PC-3 (cell line): ENCODE measurements at regions of chr10 and their contacts with region 1.

Region 1: GRCh38 chr10:132571650-132572535 is 34.3 kb downstream of the INPP5A start:
- DNase-seq: peak; percentile 94
- ATAC-seq: peak; percentile 73
- H3K4me3 ChIP-seq: peak overlapping the region; percentile 51; the same call in 1 of the 2 replicates
- H3K27ac ChIP-seq: peak overlapping the region; percentile 92
- H3K4me1 ChIP-seq: peaks cover 49% of the 10 kb centered on the region
- H3K27me3 ChIP-seq: no peaks in the 10 kb centered on the region
- CTCF ChIP-seq: no peak; the same call in 1 of the 2 replicates

Region 2: DNA sequence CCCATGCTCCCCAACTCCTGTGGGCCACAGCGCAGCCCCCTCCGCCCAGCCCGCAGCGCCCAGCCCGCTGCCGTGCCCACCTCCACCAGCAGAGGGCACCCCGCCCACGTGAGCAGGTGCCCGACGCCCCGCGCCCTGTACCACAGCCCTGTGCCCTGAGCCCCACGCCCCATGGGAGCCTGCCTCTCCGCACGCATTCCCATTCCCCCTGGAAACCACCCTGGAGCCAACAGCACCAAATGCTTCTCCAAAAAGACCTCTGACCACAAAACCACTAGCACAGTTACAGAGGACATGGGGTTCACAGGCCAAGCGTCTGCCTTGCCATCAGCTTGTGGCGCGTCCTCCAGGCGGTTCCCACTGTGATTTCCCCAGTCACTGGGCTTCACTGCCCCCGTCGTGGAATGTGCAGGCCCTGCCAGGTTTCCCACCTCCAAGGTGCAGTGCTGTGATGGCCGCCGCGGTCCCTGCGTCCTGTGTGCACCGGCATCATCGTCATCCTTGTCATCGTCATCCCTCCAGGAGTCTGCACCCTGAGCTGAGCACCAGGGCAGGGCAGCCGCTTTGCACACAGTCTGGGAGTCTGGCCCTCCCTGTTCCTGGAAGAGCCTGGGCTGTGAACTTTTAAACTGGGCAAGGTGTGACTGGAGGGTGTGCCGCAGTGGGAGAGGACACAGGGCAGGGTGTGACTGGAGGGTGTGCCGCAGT is 113.1 kb before region 1 on chr10:
- CTCF ChIA-PET with region 1: no interaction called
- POLR2A ChIA-PET with region 1: no interaction called
- intact Hi-C with region 1: loop called (anchors 2 kb)
- DNase-seq: peak; percentile 36
- ATAC-seq: peak; percentile 68
- H3K4me3 ChIP-seq: no peak overlapping the region
- H3K27ac ChIP-seq: no peak overlapping the region
- H3K4me1 ChIP-seq: 0 out of 2 replicates have a peak, but pooled peaks cover 5% of the 10 kb centered on the region
- H3K27me3 ChIP-seq: no peaks in the 10 kb centered on the region
- CTCF ChIP-seq: peak; percentile 88

Region 3: GRCh38 chr10:132526676-132527075 is 45.2 kb before region 1 on chr10:
- CTCF ChIA-PET with region 1: no interaction called
- POLR2A ChIA-PET with region 1: no interaction called
- intact Hi-C with region 1: no loop called
- DNase-seq: no peak
- ATAC-seq: peak; percentile 67
- H3K4me3 ChIP-seq: no peak overlapping the region
- H3K27ac ChIP-seq: no peak overlapping the region
- H3K4me1 ChIP-seq: peaks cover 2% of the 10 kb centered on the region; the same call in 1 of the 2 replicates
- H3K27me3 ChIP-seq: no peaks in the 10 kb centered on the region
- CTCF ChIP-seq: no peak

Region 4: GRCh38 chr10:132536971-132537712 is 34.8 kb before region 1 on chr10:
- CTCF ChIA-PET with region 1: interaction called, 3 read pairs
- POLR2A ChIA-PET with region 1: no interaction called
- intact Hi-C with region 1: loop called (anchors 1 kb)
- DNase-seq: peak; percentile 97
- ATAC-seq: peak; percentile 66
- H3K4me3 ChIP-seq: peak overlapping the region; percentile 69
- H3K27ac ChIP-seq: peak overlapping the region; percentile 24; the same call in 1 of the 2 replicates
- H3K4me1 ChIP-seq: peaks cover 70% of the 10 kb centered on the region
- H3K27me3 ChIP-seq: no peaks in the 10 kb centered on the region
- CTCF ChIP-seq: no peak

Region 5: GRCh38 chr10:132591166-132591971 is 19.5 kb after region 1 on chr10:
- CTCF ChIA-PET with region 1: interaction called, 5 read pairs
- POLR2A ChIA-PET with region 1: interaction called, 3 read pairs
- intact Hi-C with region 1: loop called (anchors 1 kb)
- DNase-seq: peak; percentile 82
- ATAC-seq: peak; percentile 98
- H3K4me3 ChIP-seq: peak overlapping the region; percentile 45
- H3K27ac ChIP-seq: peak overlapping the region; percentile 91
- H3K4me1 ChIP-seq: peaks cover 39% of the 10 kb centered on the region
- H3K27me3 ChIP-seq: no peaks in the 10 kb centered on the region
- CTCF ChIP-seq: no peak; the same call in 1 of the 2 replicates

Region 6: GRCh38 chr10:132637477-132638129 is 65.7 kb after region 1 on chr10:
- CTCF ChIA-PET with region 1: no interaction called
- POLR2A ChIA-PET with region 1: no interaction called
- intact Hi-C with region 1: loop called (anchors 2 kb)
- DNase-seq: peak; percentile 76
- ATAC-seq: peak; percentile 70
- H3K4me3 ChIP-seq: no peak overlapping the region
- H3K27ac ChIP-seq: no peak overlapping the region
- H3K4me1 ChIP-seq: peaks cover 7% of the 10 kb centered on the region
- H3K27me3 ChIP-seq: no peaks in the 10 kb centered on the region
- CTCF ChIP-seq: peak; percentile 77

Region 7: DNA sequence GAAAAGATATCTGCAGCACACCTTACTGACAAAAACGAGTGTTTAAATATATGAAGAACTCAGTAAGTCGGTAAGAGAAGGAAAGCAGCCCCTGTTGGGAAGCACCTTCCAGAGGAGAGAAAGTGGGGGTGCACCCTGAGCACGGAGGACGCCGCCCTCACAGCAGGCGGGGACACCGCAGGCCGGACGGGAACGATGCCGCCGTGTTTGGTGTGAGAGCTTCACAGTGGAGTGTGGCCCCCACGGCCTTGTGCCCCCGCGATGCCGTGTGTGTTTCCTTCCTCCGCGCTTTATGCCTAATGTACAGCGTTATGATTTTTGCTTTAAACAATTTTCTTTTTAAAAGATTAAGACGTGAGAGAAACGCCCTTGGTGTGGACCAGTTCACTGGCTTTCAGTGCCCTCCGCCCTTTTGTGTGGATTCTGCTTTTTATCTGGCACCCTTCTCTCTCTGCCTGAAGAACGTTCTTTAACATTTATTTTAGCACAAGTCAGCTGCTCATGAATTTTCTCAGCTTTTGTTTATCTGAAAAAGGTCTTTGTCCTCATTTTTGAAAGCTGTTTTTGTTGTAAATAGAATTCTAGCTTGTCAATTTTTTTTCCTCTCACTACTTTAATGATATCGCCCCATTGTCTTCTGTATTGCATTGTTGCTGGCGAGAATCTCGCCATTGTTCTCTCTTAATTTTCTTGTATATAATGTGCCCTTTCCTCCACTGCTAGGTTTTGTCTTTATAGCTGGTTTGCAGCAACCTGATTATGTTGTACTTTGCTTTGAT is 76.4 kb after region 1 on chr10:
- CTCF ChIA-PET with region 1: no interaction called
- POLR2A ChIA-PET with region 1: no interaction called
- intact Hi-C with region 1: no loop called
- DNase-seq: no peak
- ATAC-seq: no peak
- H3K4me3 ChIP-seq: no peak overlapping the region
- H3K27ac ChIP-seq: no peak overlapping the region
- H3K4me1 ChIP-seq: no peaks in the 10 kb centered on the region
- H3K27me3 ChIP-seq: no peaks in the 10 kb centered on the region
- CTCF ChIP-seq: no peak